PC-9 (cell line): ENCODE measurements at regions of chr1 and their contacts with region 1.

Region 1: GRCh38 chr1:244112636-244113035 is 61.6 kb downstream of the ZBTB18 start:
- DNase-seq: peak in 1 of 2 experiments; percentile 68
- H3K4me3 ChIP-seq: no peak overlapping the region
- H3K27ac ChIP-seq: peak overlapping the region; percentile 8; the same call in 1 of the 2 replicates
- H3K4me1 ChIP-seq: peaks cover 20% of the 10 kb centered on the region
- H3K27me3 ChIP-seq: no peaks in the 10 kb centered on the region
- CTCF ChIP-seq: no peak

Region 2: DNA sequence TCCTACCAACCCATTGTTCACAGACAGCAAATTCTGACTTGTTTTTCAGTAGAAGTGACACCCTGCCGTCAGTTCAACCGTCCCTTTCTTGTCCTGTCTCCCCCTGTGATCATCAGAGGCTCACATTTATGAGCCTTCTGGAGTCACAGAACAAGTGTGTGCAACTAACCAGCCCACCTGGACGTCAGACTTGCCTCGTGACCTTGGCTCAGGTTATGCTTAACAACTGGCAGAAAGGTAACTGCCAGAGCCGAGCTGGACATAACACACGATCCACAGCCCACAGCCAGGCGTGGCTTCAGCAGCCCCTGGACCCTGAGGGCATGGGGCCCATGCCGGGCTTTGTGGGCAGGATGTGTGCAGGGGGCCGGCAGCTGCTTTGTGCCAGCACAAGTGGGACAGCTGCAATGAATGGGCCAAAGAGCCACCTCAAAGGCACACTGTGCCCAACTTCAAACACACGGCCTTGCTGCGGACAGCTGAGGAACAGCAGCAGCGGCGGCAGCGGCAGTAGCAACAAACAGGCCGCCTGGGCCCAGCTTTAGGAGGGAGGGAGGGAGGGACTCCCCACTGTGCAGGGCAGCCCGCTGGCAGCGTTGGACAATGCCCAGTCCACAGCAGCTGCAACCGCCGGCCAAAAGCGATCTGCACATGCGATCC is 42.4 kb after region 1 on chr1:
- CTCF ChIA-PET with region 1: no interaction called
- POLR2A ChIA-PET with region 1: no interaction called
- intact Hi-C with region 1: loop called (anchors 5 kb)
- DNase-seq: no peak
- H3K4me3 ChIP-seq: no peak overlapping the region
- H3K27ac ChIP-seq: no peak overlapping the region
- H3K4me1 ChIP-seq: peaks cover 13% of the 10 kb centered on the region
- H3K27me3 ChIP-seq: no peaks in the 10 kb centered on the region
- CTCF ChIP-seq: no peak

Region 3: GRCh38 chr1:244371242-244372141 is 258.9 kb after region 1 on chr1:
- CTCF ChIA-PET with region 1: no interaction called
- POLR2A ChIA-PET with region 1: no interaction called
- intact Hi-C with region 1: no loop called
- DNase-seq: no peak
- H3K4me3 ChIP-seq: no peak overlapping the region
- H3K27ac ChIP-seq: no peak overlapping the region
- H3K4me1 ChIP-seq: no peaks in the 10 kb centered on the region
- H3K27me3 ChIP-seq: no peaks in the 10 kb centered on the region
- CTCF ChIP-seq: no peak